CD4-positive, alpha-beta memory T cell (primary cell): ENCODE measurements at regions of chr17 and their contacts with region 1.

Region 1: DNA sequence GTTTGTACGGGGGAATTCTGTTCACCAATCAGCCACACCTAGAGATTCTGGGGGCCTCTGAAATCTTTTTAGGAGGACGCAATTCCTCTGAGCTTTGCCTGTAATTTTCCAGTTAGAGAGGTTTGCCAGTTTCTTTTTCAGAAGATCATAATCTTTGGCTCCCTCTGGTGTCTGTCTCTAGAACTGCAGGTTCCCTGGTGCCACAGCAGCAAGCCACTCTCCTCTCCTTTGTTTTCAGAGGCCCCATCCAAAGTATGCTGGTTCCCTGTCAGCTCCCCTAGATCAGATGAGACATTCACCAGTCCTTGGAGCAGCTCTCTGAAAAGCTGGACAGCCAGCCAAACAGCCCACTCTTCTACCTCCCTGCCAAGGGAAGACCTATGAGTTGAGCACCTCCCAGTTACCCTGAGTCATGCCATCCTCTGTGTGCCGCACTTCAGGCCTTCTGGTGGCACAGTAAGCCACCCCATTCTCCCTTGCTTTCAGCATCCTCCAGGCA is 36.1 kb downstream of the RNF112 start:
- DNase-seq: peak; percentile 69 to 79 (median 75)
- H3K4me3 ChIP-seq: no peak overlapping the region
- H3K4me3 Mint-ChIP-seq: no peak overlapping the region
- H3K27ac ChIP-seq: no peak overlapping the region
- H3K27ac Mint-ChIP-seq: no peak overlapping the region
- H3K4me1 ChIP-seq: no peaks in the 10 kb centered on the region
- H3K4me1 Mint-ChIP-seq: peaks cover 0 to 4% (median 3%) of the 10 kb centered on the region in 4 donors
- H3K27me3 ChIP-seq: no peaks in the 10 kb centered on the region
- H3K27me3 Mint-ChIP-seq: peaks cover 12 to 16% of the 10 kb centered on the region in 2 donors

Region 2: DNA sequence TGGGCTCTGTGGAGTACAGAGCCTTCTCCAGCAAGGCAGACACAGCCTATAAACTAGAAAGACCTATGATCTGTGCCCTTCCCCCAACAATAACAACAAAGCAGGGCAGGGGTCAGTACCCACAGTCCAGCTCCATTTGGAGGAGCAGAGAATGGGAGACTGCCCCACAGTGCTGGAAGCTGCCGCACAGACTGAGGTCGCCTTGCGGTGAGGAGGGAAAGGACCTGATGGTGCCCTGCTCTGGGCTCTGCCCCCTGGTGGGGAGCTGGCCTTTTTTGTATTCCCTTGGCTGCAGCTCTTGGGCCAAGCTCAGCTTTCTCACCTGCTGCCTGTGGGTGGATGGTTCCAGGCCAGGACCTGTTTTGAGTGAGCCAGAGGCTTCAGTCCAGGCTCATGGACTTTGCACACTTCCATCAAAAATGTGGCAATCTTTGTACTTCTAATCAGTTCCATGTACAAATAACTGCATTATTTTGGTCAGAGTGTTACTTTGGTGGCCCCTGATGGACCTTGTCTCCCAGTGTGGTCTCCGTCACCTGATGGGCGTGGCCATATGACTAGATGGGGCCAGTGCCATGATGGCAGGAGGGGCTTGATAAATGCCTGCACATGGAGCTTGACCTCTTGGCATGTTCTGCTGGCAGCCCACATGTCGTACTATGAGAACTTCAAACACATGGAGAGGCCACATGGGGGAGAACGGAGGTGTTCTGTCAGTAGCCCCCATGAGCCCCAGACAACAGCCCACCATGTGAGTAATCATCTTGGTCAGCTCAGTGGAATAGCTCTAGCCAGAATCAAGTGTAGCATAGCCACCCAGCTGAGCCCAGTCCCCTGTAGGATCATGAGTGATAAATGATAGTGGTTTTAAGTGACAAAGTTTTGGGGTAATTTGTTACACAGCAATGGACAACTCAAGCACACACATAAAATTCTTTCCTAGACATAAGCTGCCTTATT is 108.8 kb before region 1 on chr17:
- CTCF ChIA-PET with region 1: interaction called, 13 read pairs
- POLR2A ChIA-PET with region 1: no interaction called
- intact Hi-C with region 1: no loop called
- DNase-seq: peak; percentile 60 to 70 (median 63)
- H3K4me3 ChIP-seq: no peak overlapping the region
- H3K4me3 Mint-ChIP-seq: no peak overlapping the region
- H3K27ac ChIP-seq: no peak overlapping the region
- H3K27ac Mint-ChIP-seq: no peak overlapping the region
- H3K4me1 ChIP-seq: no peaks in the 10 kb centered on the region
- H3K4me1 Mint-ChIP-seq: no peaks in the 10 kb centered on the region
- H3K27me3 ChIP-seq: no peaks in the 10 kb centered on the region
- H3K27me3 Mint-ChIP-seq: peaks cover 7 to 14% of the 10 kb centered on the region in 2 donors

Region 3: DNA sequence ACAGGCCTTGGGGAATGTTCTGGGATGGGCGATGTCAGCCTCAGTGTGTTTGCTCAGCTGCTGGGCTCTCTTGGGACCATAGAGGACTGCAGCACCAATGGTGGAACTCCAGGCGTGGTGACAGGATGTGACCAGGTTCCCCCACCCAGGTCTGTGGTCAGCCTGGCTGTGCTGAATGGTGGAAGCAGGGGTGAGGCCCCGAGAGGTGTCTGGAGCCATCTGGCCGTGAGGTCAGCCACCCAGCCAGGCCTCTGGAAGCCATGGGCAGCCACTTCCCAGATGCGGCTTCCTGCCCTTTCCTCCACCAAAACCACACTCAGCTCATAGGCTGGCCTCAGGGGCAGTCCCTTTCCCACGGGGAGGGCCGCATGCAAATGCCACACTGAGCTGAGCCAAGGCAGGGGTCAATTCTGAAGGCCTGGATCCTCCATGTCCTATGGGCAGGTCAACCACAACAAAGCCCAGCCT is 76.6 kb before region 1 on chr17:
- CTCF ChIA-PET with region 1: interaction called, 133 read pairs
- POLR2A ChIA-PET with region 1: interaction called, 5 read pairs
- intact Hi-C with region 1: no loop called
- DNase-seq: no peak
- H3K4me3 ChIP-seq: peak overlapping the region; percentile 8 to 39
- H3K4me3 Mint-ChIP-seq: peak overlapping the region in 6 of 8 donors; percentile 62 to 85 (median 82)
- H3K27ac ChIP-seq: peak overlapping the region; percentile 37
- H3K27ac Mint-ChIP-seq: peak overlapping the region; percentile 91 to 99 (median 97)
- H3K4me1 ChIP-seq: peaks cover 47% of the 10 kb centered on the region
- H3K4me1 Mint-ChIP-seq: peaks cover 30 to 59% (median 46%) of the 10 kb centered on the region in 4 donors
- H3K27me3 ChIP-seq: no peaks in the 10 kb centered on the region
- H3K27me3 Mint-ChIP-seq: no peaks in the 10 kb centered on the region

Region 4: DNA sequence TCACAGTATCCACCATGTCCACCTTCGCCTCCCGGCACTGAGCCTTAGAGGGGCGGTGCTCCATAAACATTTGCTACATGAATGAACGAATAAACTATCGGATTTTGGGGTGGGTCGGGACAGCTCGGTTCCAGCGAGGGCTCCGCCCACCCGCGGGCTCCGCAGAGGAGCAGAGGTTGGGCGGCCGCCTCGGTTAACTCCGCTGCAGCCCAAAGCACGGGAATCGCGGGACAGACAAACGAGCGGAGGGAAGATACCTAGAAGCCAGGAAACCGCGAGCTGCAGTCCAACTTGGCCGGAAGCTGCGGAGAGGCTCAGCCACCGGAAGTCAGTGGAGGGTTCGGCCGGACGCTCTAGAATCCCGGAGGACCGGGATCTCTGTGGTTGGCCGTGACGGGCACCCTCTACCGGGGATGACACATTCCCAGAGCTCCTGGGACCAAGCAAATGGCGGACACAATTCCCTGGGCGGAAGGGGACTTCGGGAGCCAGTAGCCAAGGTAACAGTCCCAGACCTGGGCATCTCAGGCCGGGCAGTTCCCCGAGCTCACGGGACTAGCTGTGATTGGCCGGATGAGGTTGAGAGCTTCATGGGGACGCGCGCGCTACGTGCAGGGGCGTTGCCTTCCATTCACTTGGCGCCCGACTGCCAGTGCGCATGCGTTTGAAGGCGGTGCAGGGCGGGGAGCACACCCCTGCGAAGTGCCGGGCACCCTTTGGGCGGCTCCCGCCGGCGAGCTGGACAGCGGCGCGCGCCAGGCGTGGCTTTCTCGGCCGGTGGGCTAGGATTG is 69.3 kb before region 1 on chr17:
- CTCF ChIA-PET with region 1: interaction called, 30 read pairs
- POLR2A ChIA-PET with region 1: interaction called, 3 read pairs
- intact Hi-C with region 1: no loop called
- DNase-seq: peak; percentile 94 to 96 (median 95)
- H3K4me3 ChIP-seq: peak overlapping the region; percentile 96 to 98
- H3K4me3 Mint-ChIP-seq: peak overlapping the region; percentile 94 to 100 (median 99)
- H3K27ac ChIP-seq: peak overlapping the region; percentile 91
- H3K27ac Mint-ChIP-seq: peak overlapping the region; percentile 91 to 99 (median 98)
- H3K4me1 ChIP-seq: peaks cover 19% of the 10 kb centered on the region
- H3K4me1 Mint-ChIP-seq: peaks cover 12 to 49% (median 18%) of the 10 kb centered on the region in 4 donors
- H3K27me3 ChIP-seq: no peaks in the 10 kb centered on the region
- H3K27me3 Mint-ChIP-seq: no peaks in the 10 kb centered on the region

Region 5: GRCh38 chr17:19457830-19458271 is 10.7 kb after region 1 on chr17:
- CTCF ChIA-PET with region 1: interaction called, 11 read pairs
- POLR2A ChIA-PET with region 1: no interaction called
- intact Hi-C with region 1: no loop called
- DNase-seq: no peak
- H3K4me3 ChIP-seq: no peak overlapping the region
- H3K4me3 Mint-ChIP-seq: no peak overlapping the region
- H3K27ac ChIP-seq: no peak overlapping the region
- H3K27ac Mint-ChIP-seq: peak overlapping the region in 1 of 7 donors; percentile 22
- H3K4me1 ChIP-seq: peaks cover 22% of the 10 kb centered on the region
- H3K4me1 Mint-ChIP-seq: peaks cover 12 to 50% (median 27%) of the 10 kb centered on the region in 4 donors
- H3K27me3 ChIP-seq: no peaks in the 10 kb centered on the region
- H3K27me3 Mint-ChIP-seq: peaks cover under 1 to 2% of the 10 kb centered on the region in 2 donors

Region 6: DNA sequence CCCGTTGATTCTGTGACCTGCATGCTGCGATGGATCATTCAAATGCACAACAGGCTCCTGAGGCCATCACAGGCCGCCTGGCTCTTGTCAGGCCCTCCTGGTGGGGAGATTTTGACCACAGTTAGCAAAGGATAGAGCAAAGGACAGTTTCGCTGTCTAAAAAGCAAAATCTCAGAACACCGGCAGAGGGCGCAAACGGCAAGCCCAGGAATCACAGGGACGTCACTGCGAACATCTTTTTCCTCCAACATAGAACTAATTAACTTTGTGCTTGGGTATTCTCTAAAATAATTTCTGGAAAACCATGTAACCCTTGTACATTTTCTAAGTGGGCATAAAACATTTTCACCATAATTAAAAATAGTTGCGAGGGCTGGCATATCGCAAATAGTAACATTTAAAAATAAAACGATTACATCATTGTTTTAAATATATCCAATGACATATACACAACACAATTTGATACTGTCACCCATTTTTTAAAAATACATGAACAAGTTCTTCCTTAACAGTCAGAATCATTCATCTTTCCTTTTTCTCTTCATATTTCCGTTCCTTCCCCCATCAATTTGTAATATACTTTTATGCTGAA is 66.9 kb after region 1 on chr17:
- CTCF ChIA-PET with region 1: no interaction called
- POLR2A ChIA-PET with region 1: no interaction called
- intact Hi-C with region 1: no loop called
- DNase-seq: peak; percentile 59 to 68 (median 64)
- H3K4me3 ChIP-seq: no peak overlapping the region
- H3K4me3 Mint-ChIP-seq: no peak overlapping the region
- H3K27ac ChIP-seq: no peak overlapping the region
- H3K27ac Mint-ChIP-seq: peak overlapping the region in 4 of 7 donors; percentile 7 to 68 (median 31)
- H3K4me1 ChIP-seq: no peaks in the 10 kb centered on the region
- H3K4me1 Mint-ChIP-seq: peaks cover 1 to 8% (median 3%) of the 10 kb centered on the region in 4 donors
- H3K27me3 ChIP-seq: no peaks in the 10 kb centered on the region
- H3K27me3 Mint-ChIP-seq: no peaks in the 10 kb centered on the region